ENCODE measurements at regions of chr13 and their contacts with region 1.

Region 1: GRCh38 chr13:21476893-21477472 is 17.9 kb upstream of the ZDHHC20 start:
- DNase-seq: peak; percentile 57 to 70
- ATAC-seq: peak; percentile 43 to 76
- H3K4me3 ChIP-seq: peak overlapping the region; percentile 46 to 61 (median 56)
- H3K27ac ChIP-seq: peak overlapping the region in 3 of 4 donors; percentile 28 to 41 (median 37)
- H3K4me1 ChIP-seq: peaks cover 16 to 19% of the 10 kb centered on the region in 2 donors
- H3K27me3 ChIP-seq: no peaks in the 10 kb centered on the region
- CTCF ChIP-seq: peak; percentile 83 to 99 (median 88)
- POLR2A ChIP-seq: no peak

Region 2: DNA sequence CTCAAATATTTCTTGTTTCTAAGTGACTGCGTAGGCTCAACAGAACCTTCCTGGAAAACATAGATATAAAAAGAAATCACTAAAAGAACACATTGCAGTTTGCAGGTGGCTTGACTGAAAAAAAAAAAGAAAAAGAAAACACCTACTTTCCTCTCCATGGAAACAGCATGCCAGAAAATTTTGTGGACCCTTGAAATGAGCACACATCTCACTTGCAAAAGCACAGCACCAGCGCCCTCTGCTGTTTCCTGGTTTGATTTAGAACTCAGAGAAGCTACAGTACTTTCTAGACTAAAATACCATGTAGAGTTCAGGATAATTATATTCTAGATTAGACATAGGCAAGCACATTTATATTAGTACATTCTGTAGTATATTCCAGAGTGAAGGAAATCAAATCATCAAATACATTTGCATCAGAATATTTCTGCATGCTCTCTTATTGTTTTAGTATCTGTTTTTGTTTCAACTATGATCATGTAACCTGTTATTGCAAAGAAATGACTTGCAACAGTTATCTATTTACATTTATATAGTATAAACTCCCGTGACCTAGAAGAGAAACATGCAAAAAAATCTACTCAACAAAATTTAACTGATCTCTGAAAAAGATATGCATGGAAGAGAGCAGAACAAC is 552.1 kb before region 1 on chr13:
- in situ Hi-C with region 1: loop called in 1 of 4 experiments (anchors 25 kb)
- intact Hi-C with region 1: no loop called
- DNase-seq: peak; percentile 36 to 57
- ATAC-seq: peak in 1 of 2 donors; percentile 68
- H3K4me3 ChIP-seq: no peak overlapping the region
- H3K27ac ChIP-seq: no peak overlapping the region
- H3K4me1 ChIP-seq: no peaks in the 10 kb centered on the region
- H3K27me3 ChIP-seq: no peaks in the 10 kb centered on the region
- CTCF ChIP-seq: peak; percentile 43 to 84 (median 64)
- POLR2A ChIP-seq: no peak

Region 3: DNA sequence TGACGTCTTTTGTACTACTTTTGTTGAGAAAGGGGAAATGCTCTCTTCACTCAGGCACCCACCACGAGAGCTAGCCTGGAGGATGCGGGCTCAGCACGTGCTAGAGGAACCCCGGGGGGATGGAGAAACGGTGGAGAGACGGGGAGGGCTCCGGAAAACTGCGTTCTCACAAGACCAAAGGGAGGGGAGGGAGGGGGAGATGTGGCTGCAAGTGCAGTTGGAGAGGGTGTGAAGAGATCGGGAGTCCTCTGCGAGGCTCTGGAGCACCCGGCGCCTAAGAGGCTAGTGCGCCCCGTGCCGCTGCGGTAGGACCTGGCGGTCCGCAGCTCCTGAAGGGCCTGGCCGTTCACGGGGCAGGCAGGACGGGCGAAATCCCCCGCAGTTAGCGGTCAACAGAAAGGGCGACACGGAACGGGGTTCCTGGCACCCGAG is 531.0 kb before region 1 on chr13:
- in situ Hi-C with region 1: loop called (anchors 5 to 25 kb)
- intact Hi-C with region 1: loop called (anchors 1 kb)
- DNase-seq: no peak
- ATAC-seq: no peak
- H3K4me3 ChIP-seq: peak overlapping the region in 2 of 4 donors; percentile 22 to 39
- H3K27ac ChIP-seq: no peak overlapping the region
- H3K4me1 ChIP-seq: peaks cover 0 to 7% of the 10 kb centered on the region in 2 donors
- H3K27me3 ChIP-seq: peaks cover 3 to 10% (median 5%) of the 10 kb centered on the region in 3 donors
- CTCF ChIP-seq: no peak
- POLR2A ChIP-seq: no peak

Region 4: GRCh38 chr13:21060987-21061763 is 415.8 kb before region 1 on chr13 and contains the start of gene LATS2:
- in situ Hi-C with region 1: no loop called
- intact Hi-C with region 1: loop called (anchors 5 kb)
- DNase-seq: peak; percentile 93 to 96
- ATAC-seq: peak; percentile 87 to 88
- H3K4me3 ChIP-seq: peak within 1 kb of the TSS; percentile 69 to 95 (median 92)
- H3K27ac ChIP-seq: peak within 1 kb of the TSS; percentile 87 to 100 (median 100)
- H3K4me1 ChIP-seq: peaks cover 43 to 45% of the 10 kb centered on the region in 2 donors
- H3K27me3 ChIP-seq: no peaks in the 10 kb centered on the region
- CTCF ChIP-seq: peak in 3 of 5 experiments; percentile 59 to 69 (median 59)
- POLR2A ChIP-seq: peak; percentile 79 to 91
- total RNA-seq, gene LATS2: 11.5 to 34.1 (median 18.8) TPM

Region 5: DNA sequence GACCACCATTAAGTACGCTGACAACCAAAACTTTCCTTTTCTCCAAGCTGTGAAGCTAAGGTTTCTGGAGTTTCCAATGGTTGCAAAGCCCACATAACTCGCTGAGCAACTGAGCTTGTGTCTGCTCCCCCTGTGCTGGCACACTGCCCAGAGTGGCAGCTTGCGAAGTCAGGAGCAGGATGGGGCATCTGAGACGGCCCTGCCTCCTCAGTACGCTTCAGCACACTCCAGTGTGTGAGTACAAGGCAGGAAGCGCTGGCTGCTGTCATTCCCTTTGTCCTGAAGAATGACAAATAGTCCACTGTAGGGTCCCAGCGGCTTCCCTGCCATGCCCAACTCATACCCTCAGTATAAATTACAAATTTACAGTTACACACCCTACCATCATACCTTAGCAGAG is 352.1 kb before region 1 on chr13:
- in situ Hi-C with region 1: loop called in 2 of 4 experiments (anchors 25 kb)
- intact Hi-C with region 1: no loop called
- DNase-seq: no peak
- ATAC-seq: no peak
- H3K4me3 ChIP-seq: no peak overlapping the region
- H3K27ac ChIP-seq: no peak overlapping the region
- H3K4me1 ChIP-seq: no peaks in the 10 kb centered on the region
- H3K27me3 ChIP-seq: no peaks in the 10 kb centered on the region
- CTCF ChIP-seq: no peak
- POLR2A ChIP-seq: no peak

Region 6: DNA sequence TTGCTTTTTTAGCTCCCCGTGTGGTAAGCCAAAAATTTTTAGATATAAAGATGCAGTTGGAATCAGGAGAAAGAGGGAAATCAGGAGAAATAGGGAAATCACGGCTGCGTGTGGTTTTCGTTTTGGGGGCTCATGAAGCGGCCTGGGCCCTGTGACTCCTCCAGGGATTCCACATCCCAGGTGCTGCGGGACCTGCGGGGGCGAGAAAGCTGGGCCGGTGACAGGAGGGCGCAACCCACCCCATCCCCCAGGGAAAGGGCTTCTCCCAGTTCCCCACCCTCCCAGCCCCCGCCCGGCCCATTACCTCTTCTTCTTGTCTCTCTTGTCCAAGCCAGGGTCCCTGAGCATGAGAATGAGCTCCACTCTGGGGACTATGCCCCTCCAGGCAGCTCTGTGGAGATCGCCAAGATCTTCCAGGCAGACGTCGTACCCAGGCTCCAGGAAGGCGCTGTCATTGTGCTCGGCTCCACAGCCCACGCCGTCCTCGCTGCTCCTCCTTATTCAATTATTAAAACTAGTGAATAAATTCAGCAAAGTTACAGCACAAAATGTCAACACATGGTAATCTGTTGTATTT is 189.6 kb before region 1 on chr13:
- in situ Hi-C with region 1: loop called (anchors 10 kb)
- intact Hi-C with region 1: no loop called
- DNase-seq: no peak
- ATAC-seq: no peak
- H3K4me3 ChIP-seq: no peak overlapping the region
- H3K27ac ChIP-seq: no peak overlapping the region
- H3K4me1 ChIP-seq: no peaks in the 10 kb centered on the region
- H3K27me3 ChIP-seq: peaks cover 0 to 2% (median 0%) of the 10 kb centered on the region in 3 donors
- CTCF ChIP-seq: no peak
- POLR2A ChIP-seq: no peak

Region 7: DNA sequence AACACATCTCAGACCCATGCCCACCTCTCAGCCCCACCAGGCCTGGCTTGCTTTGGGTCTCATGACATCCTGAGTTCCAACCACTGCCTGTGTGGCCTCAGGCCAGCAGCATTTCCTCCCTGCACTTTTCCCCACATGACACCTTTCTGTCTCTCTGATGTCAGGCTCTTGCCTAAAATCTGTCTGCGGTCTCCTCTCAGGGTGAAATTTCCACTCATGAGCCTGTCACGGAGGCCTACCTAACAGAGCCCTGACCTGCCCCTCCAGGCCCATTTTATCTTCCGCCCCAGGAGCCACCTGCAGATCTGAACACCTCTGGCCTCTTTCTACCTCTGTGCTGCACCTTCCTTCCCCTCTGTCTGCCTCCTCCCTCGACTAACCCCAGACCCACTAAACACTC is 111.4 kb before region 1 on chr13:
- in situ Hi-C with region 1: no loop called
- intact Hi-C with region 1: no loop called
- DNase-seq: no peak
- ATAC-seq: no peak
- H3K4me3 ChIP-seq: no peak overlapping the region
- H3K27ac ChIP-seq: no peak overlapping the region
- H3K4me1 ChIP-seq: no peaks in the 10 kb centered on the region
- H3K27me3 ChIP-seq: no peaks in the 10 kb centered on the region
- CTCF ChIP-seq: no peak
- POLR2A ChIP-seq: no peak

Region 8: DNA sequence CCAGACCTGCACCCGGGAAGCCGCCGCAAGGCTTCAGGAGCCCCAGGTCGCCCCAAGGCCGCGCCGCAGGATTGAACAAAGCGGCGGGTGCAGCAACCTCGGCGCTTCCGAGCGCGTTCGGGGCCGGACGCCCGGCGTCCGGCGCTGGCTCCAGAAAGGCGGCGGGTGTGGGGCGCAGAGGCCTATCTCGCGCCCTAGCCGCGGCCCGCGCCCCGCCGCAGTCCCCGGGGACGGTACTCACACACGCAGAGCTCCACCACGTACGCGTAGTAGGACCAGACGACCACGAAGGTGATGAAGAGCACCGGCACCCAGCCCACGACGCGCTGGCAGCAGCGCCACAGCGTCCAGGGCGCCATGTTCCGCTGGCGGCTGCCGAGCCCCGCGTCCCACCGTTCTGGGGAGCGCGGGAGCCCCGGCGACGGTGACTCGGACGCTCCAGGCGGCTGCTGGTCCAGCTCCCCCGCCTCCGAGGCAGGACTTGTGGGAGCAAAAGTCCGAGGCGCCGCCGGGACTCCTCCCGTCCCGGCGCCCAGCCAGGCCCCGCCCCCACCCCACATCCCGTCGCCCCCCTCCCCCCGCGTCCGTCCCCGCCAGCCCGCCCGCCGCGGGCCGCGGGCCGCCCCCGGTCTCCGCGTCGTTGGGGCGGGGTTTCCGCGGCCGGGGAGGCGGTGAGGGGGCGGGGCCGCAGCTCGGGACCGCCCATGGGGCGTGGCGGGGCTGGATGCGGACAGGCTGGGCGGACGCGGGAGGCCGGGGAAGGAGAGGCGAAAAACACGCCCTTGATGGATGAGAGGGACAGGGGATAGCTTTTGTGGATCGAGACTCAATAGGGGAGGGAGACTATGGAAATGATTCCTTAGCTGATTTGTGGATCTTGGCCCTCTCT is 17.9 kb before region 1 on chr13 and contains the start of gene ZDHHC20:
- in situ Hi-C with region 1: no loop called
- intact Hi-C with region 1: loop called (anchors 1 kb)
- DNase-seq: peak; percentile 72 to 81
- ATAC-seq: peak; percentile 90 to 92
- H3K4me3 ChIP-seq: peak within 1 kb of the TSS; percentile 88 to 99 (median 94)
- H3K27ac ChIP-seq: peak within 1 kb of the TSS; percentile 79 to 98 (median 89)
- H3K4me1 ChIP-seq: peaks cover 10 to 15% of the 10 kb centered on the region in 2 donors
- H3K27me3 ChIP-seq: no peaks in the 10 kb centered on the region
- CTCF ChIP-seq: no peak
- POLR2A ChIP-seq: peak; percentile 66 to 74
- total RNA-seq, gene ZDHHC20: 14.6 to 29.2 (median 23.1) TPM

Region 9: GRCh38 chr13:21541980-21542379 is 65.0 kb after region 1 on chr13:
- in situ Hi-C with region 1: no loop called
- intact Hi-C with region 1: no loop called
- DNase-seq: no peak
- ATAC-seq: no peak
- H3K4me3 ChIP-seq: no peak overlapping the region
- H3K27ac ChIP-seq: no peak overlapping the region
- H3K4me1 ChIP-seq: peaks cover 19 to 26% of the 10 kb centered on the region in 2 donors
- H3K27me3 ChIP-seq: no peaks in the 10 kb centered on the region
- CTCF ChIP-seq: no peak
- POLR2A ChIP-seq: no peak

Measured in gastrocnemius medialis (tissue), 4 donors.